OCI-LY7 (cell line): ENCODE measurements at regions of chr7 and their contacts with region 1.

Region 1: DNA sequence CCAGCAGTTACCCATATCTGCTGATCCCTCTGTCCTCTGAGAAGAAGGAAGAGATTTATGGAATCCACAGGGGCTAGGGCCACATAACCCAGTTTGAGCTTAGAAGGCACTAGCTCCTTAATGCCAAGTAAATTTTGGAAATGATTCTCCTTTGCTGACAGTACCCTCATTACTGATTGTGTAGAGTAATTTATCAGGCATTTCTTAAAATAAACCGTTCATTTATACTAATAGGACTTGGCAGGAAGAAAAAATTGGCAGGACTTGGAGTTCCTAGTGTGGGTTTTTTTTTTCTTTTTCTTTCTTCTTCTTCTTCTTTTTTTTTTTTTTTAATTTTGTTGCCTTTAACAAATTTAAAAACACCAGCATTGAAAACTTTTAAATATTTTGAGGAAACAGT is 645.7 kb downstream of the SUGCT start:
- DNase-seq: no peak
- H3K4me3 ChIP-seq: no peak overlapping the region
- H3K27ac ChIP-seq: no peak overlapping the region
- H3K4me1 ChIP-seq: peaks cover 40% of the 10 kb centered on the region
- CTCF ChIP-seq: no peak

Region 2: GRCh38 chr7:40765639-40766038 is 14.8 kb before region 1 on chr7:
- CTCF ChIA-PET with region 1: no interaction called
- POLR2A ChIA-PET with region 1: interaction called, 10 read pairs
- intact Hi-C with region 1: no loop called
- DNase-seq: peak; percentile 44
- H3K4me3 ChIP-seq: no peak overlapping the region
- H3K27ac ChIP-seq: no peak overlapping the region
- H3K4me1 ChIP-seq: peaks cover 38% of the 10 kb centered on the region
- CTCF ChIP-seq: no peak

Region 3: DNA sequence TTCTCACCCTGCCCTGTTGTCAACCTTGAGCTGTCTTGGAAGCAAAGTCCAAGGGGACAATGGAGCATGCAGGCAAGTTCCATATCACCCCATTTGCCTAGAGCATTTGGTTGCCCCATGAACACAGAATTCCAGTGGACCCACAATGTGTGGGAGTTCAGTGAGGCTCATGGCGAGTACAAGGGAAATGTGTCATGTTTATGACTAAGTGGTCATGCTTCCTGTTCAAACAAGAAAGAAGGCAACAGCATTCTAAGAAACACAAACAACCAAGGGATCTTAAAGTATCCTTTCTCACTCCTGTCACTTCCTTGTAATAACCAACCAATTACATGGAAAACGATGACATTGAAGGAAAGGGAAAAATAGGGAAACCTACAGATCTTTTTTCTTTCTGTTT is 409.4 kb after region 1 on chr7:
- CTCF ChIA-PET with region 1: no interaction called
- POLR2A ChIA-PET with region 1: no interaction called
- intact Hi-C with region 1: no loop called
- DNase-seq: no peak
- H3K4me3 ChIP-seq: no peak overlapping the region
- H3K27ac ChIP-seq: no peak overlapping the region
- H3K4me1 ChIP-seq: no peaks in the 10 kb centered on the region
- CTCF ChIP-seq: no peak

Region 4: DNA sequence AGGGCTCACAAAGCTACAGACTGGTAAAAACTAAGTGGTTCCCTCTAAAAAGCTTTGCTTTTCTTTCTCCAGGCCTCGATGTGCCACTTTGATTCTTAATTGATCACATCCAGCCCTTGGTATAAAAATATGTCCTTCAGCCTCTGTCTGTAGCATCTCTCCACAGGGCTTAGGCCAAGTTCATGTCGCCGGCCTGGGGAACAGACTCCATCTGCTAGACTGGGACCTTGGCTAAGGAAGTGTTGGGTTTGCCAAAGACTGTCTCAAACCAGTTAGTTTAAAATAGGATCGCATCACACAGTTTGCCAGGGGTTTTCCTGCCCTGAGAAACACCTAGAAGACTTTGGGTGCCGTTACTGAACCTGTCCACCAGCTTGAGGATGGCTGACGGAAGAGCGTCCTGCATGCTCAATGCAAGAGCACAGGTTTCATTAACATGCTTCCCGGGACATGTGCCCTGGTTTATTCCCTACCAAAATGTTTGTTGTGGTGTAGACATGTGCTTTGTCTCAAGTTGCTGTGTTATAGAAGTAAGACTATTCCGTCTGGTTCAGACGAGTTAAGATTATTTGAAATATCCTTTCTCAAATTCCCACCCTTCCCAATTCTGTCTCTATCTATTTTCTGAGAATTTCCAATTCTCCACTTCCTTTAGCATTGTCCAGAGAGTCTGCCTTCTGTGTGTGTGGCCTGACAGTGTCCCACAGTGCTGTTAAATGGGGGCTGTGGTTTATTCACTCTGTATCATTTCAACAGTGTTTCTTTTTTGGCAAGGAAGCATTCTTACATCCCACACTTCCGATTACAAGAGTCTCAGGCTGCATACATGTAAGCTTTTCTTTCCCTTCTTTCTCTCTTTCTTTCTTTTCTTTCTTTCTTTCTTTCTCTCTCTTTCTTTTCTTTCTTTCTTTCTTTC is 587.8 kb after region 1 on chr7:
- CTCF ChIA-PET with region 1: no interaction called
- POLR2A ChIA-PET with region 1: no interaction called
- intact Hi-C with region 1: no loop called
- DNase-seq: no peak
- H3K4me3 ChIP-seq: no peak overlapping the region
- H3K27ac ChIP-seq: no peak overlapping the region
- H3K4me1 ChIP-seq: no peaks in the 10 kb centered on the region
- CTCF ChIP-seq: no peak